Activated CD4-positive, alpha-beta T cell treated with anti-CD3 and anti-CD28 coated beads for 36 hours (primary cell): ENCODE measurements at regions of chrX and their contacts with region 1.

Region 1: GRCh38 chrX:97685753-97686152 is 802.0 kb downstream of the RPA4 start:
- DNase-seq: peak; percentile 22
- ATAC-seq: no peak
- H3K4me3 Mint-ChIP-seq: no peak overlapping the region
- H3K27ac Mint-ChIP-seq: no peak overlapping the region
- H3K4me1 Mint-ChIP-seq: no peaks in the 10 kb centered on the region
- H3K27me3 Mint-ChIP-seq: no peaks in the 10 kb centered on the region

Region 2: DNA sequence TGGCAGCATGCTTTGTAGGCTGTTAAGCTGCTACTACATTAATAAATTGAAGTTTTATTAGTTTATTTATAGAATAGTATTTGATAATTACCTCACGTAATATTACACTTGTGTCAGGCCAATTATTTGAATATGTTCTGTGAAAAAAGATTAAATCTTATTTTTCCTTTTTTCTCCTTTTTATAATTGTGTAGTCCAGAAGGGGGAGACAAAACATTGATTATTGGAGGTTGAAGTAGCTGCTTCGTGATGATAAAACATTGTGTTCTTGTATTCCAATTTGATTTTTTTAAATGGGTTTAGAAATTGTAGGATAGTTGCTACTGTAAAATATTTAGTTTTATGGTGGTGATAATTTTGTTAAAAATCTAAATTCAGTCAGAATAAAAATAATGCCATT is 915.4 kb before region 1 on chrX:
- CTCF ChIA-PET with region 1: no interaction called
- POLR2A ChIA-PET with region 1: no interaction called
- intact Hi-C with region 1: loop called (anchors 1 to 5 kb)
- DNase-seq: no peak
- ATAC-seq: no peak
- H3K4me3 Mint-ChIP-seq: no peak overlapping the region
- H3K27ac Mint-ChIP-seq: no peak overlapping the region
- H3K4me1 Mint-ChIP-seq: no peaks in the 10 kb centered on the region
- H3K27me3 Mint-ChIP-seq: no peaks in the 10 kb centered on the region

Region 3: GRCh38 chrX:97026406-97026805 is 659.3 kb before region 1 on chrX:
- CTCF ChIA-PET with region 1: interaction called, 3 read pairs
- POLR2A ChIA-PET with region 1: no interaction called
- intact Hi-C with region 1: loop called in 1 of 2 experiments (anchors 5 kb)
- DNase-seq: no peak
- ATAC-seq: no peak
- H3K4me3 Mint-ChIP-seq: no peak overlapping the region
- H3K27ac Mint-ChIP-seq: no peak overlapping the region
- H3K4me1 Mint-ChIP-seq: peaks cover 9% of the 10 kb centered on the region
- H3K27me3 Mint-ChIP-seq: no peaks in the 10 kb centered on the region

Region 4: DNA sequence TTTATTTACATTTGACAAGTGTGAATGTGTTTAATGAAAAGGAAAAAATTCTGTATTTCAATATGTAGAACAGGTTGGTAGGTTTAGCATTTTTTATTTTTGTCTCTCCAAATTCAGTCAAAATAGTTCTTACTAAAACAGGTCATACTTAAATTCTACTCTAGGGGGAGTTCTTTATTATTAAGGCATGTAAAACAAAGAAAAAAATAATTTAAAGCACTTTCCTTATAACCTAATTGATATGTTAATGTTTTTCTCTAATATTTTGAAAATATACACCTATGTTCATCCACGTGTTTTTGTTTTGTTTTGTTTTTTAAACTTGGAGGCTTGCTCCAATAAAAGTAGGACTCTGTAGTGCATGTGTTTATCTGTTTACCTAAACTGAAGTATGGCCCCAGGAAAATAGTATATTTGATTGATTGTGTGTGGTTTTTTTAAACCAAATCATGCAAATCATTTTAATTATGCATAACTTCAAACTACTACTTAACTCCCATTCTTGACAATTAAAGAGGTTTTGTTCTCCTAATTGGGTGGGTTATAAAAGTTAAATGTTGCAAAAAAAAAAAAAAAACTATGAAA is 239.4 kb before region 1 on chrX:
- CTCF ChIA-PET with region 1: interaction called, 3 read pairs
- POLR2A ChIA-PET with region 1: no interaction called
- intact Hi-C with region 1: loop called in 1 of 2 experiments (anchors 10 kb)
- DNase-seq: no peak
- ATAC-seq: no peak
- H3K4me3 Mint-ChIP-seq: no peak overlapping the region
- H3K27ac Mint-ChIP-seq: no peak overlapping the region
- H3K4me1 Mint-ChIP-seq: no peaks in the 10 kb centered on the region
- H3K27me3 Mint-ChIP-seq: no peaks in the 10 kb centered on the region

Region 5: DNA sequence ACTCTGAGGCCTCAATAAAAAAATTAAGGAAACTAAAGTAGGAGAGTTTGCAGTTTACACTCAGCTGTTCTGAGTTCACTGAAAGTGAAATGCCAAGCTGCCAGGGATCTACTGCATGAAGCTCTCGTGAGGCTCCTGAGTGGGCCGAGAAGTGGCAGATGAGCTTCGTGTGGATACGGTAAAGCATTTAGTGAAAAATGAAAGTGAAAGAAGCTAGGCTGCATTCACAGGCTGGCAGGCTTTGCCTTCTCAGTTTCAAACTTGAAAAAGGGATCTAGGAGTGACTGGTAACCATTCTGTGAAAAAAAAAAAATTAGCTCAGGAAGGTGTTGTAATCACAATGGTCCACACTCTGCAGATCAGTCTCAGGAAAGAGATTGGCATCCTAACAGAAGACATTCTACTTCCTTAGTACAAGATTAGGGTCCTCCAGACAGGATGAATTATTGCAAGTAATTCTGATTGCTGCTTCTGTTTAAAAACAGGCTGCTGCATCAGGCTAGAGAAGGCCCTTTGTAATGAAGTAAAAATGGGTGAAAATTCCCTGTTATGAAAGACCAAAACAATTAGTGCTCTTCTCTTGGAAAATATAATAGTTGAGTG is 122.1 kb before region 1 on chrX:
- CTCF ChIA-PET with region 1: no interaction called
- POLR2A ChIA-PET with region 1: no interaction called
- intact Hi-C with region 1: loop called in 1 of 2 experiments (anchors 10 kb)
- DNase-seq: peak; percentile 61
- ATAC-seq: peak; percentile 98
- H3K4me3 Mint-ChIP-seq: peak overlapping the region; percentile 59
- H3K27ac Mint-ChIP-seq: peak overlapping the region; percentile 79
- H3K4me1 Mint-ChIP-seq: peaks cover 10% of the 10 kb centered on the region
- H3K27me3 Mint-ChIP-seq: no peaks in the 10 kb centered on the region